ENCODE measurements at regions of chr16 and their contacts with region 1.

Region 1: GRCh38 chr16:50368410-50369132 is at the start of gene BRD7:
- DNase-seq: peak in 6 of 10 donors; percentile 45 to 80 (median 57)
- H3K4me3 ChIP-seq: peak within 1 kb of the TSS; percentile 64 to 98 (median 90)
- H3K27ac ChIP-seq: peak within 1 kb of the TSS in 27 of 59 donors; percentile 1 to 85 (median 45)
- H3K27me3 ChIP-seq: no peaks in the 10 kb centered on the region
- CTCF ChIP-seq: peak in 35 of 56 donors; percentile 11 to 74 (median 53)
- total RNA-seq, gene BRD7: 39.0 to 87.8 (median 53.4) TPM

Region 2: GRCh38 chr16:50152807-50153452 is 215.6 kb before region 1 on chr16 and contains the start of gene TENT4B:
- intact Hi-C with region 1: loop called in 1 of 2 experiments (anchors 10 kb)
- DNase-seq: peak; percentile 67 to 90 (median 79)
- H3K4me3 ChIP-seq: peak within 1 kb of the TSS; percentile 78 to 97 (median 90)
- H3K27ac ChIP-seq: peak within 1 kb of the TSS; percentile 80 to 98 (median 94)
- H3K27me3 ChIP-seq: no peaks in the 10 kb centered on the region
- CTCF ChIP-seq: peak in 9 of 56 donors; percentile 6 to 42 (median 10)
- total RNA-seq, gene TENT4B: 9.9 to 37.1 (median 18.3) TPM

Region 3: GRCh38 chr16:50520451-50521245 is 152.1 kb after region 1 on chr16:
- intact Hi-C with region 1: loop called in 1 of 2 experiments (anchors 5 kb)
- DNase-seq: peak; percentile 7 to 81 (median 70)
- H3K4me3 ChIP-seq: peak overlapping the region in 16 of 59 donors; percentile 1 to 44 (median 20)
- H3K27ac ChIP-seq: peak overlapping the region in 56 of 59 donors; percentile 0 to 93 (median 81)
- H3K27me3 ChIP-seq: peaks cover 0 to 3% (median 0%) of the 10 kb centered on the region in 45 donors
- CTCF ChIP-seq: peak in 7 of 56 donors; percentile 6 to 29 (median 17)

Region 4: GRCh38 chr16:50593410-50594150 is 225.0 kb after region 1 on chr16:
- intact Hi-C with region 1: loop called in 1 of 2 experiments (anchors 5 kb)
- DNase-seq: no peak
- H3K4me3 ChIP-seq: no peak overlapping the region
- H3K27ac ChIP-seq: no peak overlapping the region
- H3K27me3 ChIP-seq: no peaks in the 10 kb centered on the region
- CTCF ChIP-seq: peak in 46 of 56 donors; percentile 11 to 66 (median 35)

Region 5: DNA sequence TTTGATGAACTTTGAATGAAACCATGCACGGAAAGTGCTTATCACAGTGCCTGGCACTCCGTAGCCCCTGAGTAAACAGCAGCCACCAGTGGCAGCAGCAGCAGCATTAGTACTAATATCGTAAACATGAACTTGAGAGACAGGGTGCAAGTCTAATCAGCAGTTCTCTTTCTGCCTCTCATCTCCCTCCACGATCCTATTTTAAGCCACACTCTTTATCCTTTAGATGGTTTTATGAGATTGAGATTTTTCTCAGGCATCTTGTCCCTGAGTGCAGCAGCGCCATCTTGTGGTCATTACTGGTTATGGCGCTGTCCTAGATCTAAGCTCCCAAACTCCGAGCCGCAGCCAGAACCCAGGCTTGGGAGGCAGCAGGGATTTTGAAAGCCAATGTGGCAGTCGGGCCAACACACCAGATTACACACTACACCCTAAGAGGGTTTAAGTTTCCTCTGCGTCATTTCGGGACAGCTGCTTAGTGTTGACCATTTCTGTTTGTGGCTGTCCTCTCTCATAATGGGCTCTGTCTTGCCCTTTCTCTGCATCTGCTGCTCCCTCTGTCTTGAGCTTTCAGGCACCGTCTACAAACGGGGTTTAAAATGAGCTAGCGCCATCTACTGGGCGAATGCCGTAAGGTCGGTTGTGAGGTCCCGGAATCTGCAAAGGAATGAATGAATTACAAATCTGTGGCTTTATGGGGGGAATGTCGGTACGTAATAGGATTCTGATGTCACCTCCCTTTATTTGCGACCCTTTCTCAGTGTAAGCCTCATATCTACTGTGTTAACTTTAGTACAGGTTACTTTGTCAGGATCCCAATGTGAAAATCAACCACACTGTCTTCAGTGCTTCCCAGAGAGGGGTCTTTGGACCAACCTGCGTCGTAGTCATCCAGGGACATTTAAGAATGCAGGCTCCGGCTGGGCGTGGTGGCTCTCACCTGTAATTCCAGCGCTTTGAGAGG is 437.8 kb after region 1 on chr16:
- intact Hi-C with region 1: loop called (anchors 2 to 10 kb)
- DNase-seq: peak; percentile 80 to 93 (median 84)
- H3K4me3 ChIP-seq: peak overlapping the region in 56 of 59 donors; percentile 17 to 62 (median 47)
- H3K27ac ChIP-seq: peak overlapping the region; percentile 69 to 96 (median 92)
- H3K27me3 ChIP-seq: no peaks in the 10 kb centered on the region
- CTCF ChIP-seq: peak; percentile 81 to 100 (median 97)

Measured in dorsolateral prefrontal cortex (tissue), 120 donors.